Activated CD4-positive, alpha-beta T cell treated with anti-CD3 and anti-CD28 coated beads for 36 hours (primary cell): ENCODE measurements at regions of chr14 and their contacts with region 1.

Region 1: DNA sequence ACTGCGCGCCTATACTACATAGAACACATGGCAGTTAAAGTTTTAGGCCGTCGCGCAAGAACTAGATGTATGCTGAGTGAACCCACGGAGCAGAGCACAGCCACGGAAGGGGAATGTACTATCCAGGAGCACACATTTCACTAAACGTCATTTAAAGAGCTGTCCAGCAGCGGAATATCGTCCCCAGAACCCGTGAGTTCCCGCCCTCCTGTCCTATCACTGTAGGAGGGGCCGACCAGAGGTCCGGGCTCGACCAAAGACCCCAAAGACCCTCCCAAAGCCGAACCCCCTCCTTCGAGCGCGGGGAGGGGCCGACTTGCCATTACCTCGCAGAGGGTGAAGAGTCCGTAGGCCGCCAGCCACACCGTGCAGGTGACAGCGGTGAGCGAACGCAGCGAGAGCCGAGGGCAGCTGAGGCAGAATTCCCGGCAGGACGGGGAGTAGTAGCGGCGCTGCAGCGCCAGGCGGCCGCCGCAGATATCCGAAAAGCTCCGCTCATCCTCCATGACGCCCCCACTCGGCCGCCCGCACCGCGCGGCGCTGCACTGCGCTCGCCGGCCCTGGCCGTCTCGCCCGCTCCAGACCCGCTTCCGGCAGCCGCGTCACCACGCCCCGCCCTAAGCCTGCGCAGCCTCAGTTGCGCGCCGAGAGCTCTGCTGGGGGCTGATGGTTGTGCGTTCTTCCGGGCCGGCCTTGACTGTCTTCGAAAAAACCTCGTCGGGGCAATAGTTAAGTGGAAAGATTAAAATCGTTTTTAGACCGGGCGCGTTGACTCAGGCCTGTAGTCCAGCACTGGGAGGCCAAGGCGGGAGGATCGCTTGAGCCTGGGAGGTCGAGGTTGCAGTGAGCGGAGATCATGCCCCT is at the start of gene PIGH:
- DNase-seq: peak; percentile 97
- ATAC-seq: peak; percentile 99
- H3K4me3 Mint-ChIP-seq: peak within 1 kb of the TSS; percentile 94
- H3K27ac Mint-ChIP-seq: peak within 1 kb of the TSS; percentile 94
- H3K4me1 Mint-ChIP-seq: peaks cover 34% of the 10 kb centered on the region
- H3K27me3 Mint-ChIP-seq: no peaks in the 10 kb centered on the region
- total RNA-seq, gene PIGH: 14.9 to 21.4 TPM

Region 2: DNA sequence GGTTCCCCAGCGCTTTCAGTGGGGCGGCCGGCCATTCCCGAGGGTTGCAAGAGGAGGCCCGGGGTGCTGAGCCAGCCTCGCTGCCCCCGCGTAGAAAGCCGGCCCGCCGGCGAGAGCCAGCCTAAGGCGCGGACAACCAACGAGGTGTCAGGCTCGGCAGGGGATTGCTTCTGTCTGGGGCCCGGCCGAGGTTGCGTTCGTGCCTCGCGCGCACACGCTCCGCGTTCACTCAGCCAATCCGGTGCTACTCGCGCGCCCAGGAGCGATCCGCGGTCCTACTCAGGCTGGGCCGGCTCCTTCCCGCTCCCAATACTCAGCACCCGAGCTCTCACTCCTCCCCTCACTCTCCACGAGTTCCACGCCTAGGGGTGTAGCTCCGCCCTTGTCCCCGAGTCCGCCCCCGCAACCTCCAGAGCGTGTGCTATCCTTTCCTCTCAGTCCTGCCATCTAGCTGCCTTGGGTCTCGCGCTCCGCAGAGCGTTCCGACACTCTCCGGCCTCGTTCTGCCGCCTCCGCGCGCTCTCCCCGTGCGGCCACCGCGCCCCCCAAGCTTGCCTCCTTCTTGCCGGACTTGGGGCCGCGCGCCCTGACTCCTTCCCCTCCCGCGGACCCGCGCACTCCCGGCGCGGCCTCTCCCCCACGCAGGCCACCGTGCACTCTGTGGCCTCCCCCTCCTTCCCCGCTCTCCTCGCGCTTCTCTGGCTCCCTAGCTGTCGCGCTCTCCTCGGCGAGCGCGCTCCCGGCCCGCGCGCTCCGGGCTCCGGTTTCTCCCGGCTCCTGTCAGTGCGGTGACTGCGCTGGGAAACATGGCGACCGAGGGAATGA is 1092.0 kb before region 1 on chr14 and contains the start of gene GPHN:
- CTCF ChIA-PET with region 1: no interaction called
- POLR2A ChIA-PET with region 1: no interaction called
- intact Hi-C with region 1: loop called in 1 of 2 experiments (anchors 5 kb)
- DNase-seq: peak; percentile 96
- ATAC-seq: peak; percentile 96
- H3K4me3 Mint-ChIP-seq: peak within 1 kb of the TSS; percentile 90
- H3K27ac Mint-ChIP-seq: peak within 1 kb of the TSS; percentile 94
- H3K4me1 Mint-ChIP-seq: peaks cover 39% of the 10 kb centered on the region
- H3K27me3 Mint-ChIP-seq: peaks cover 3% of the 10 kb centered on the region
- total RNA-seq, gene GPHN: 29.8 to 37.5 TPM

Region 3: DNA sequence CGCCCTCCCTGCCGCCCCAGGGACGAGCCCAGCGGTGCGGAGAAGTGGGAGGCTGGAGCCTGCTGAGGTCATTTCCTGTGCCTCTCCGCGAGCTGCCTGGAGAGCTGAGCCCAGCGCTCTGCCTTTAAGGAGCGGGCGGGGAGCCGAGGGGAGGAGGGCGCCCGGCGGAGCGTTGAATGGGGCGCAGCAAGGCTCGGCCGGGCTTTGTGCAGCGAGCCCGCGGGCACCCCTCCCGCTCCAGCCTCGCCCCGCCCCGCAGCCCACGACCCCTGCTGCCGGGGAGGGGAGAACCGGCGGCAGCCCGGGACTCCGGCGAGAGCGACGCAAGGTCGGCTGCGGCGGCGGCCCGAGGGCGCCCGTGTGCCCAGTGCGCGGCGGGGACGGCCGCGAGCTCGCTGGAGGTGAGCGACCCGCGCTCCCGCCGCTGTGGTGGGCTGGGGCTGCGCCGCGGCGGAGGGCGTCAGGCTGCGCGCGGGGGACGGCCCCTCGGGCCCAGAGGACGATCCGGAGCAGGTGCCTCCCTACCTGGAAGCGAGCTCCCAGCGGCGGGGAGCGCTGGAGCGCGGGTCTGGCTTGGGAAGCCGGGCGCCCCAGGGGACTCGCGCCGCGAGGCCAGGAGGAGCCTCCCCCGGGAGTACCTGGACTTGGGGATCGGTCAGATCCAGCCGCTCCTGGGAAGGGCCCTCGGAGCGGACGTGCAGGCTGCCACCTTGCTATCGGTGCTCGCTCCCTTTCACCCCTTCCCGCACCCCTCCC is 66.8 kb before region 1 on chr14 and contains the start of gene PLEKHH1:
- CTCF ChIA-PET with region 1: no interaction called
- POLR2A ChIA-PET with region 1: no interaction called
- intact Hi-C with region 1: no loop called
- DNase-seq: peak; percentile 82
- ATAC-seq: peak; percentile 99
- H3K4me3 Mint-ChIP-seq: peak within 1 kb of the TSS; percentile 66
- H3K27ac Mint-ChIP-seq: no peak within 1 kb of the TSS
- H3K4me1 Mint-ChIP-seq: peaks cover 3% of the 10 kb centered on the region
- H3K27me3 Mint-ChIP-seq: peaks cover 17% of the 10 kb centered on the region
- total RNA-seq, gene PLEKHH1: 4.1 to 5.7 TPM

Region 4: GRCh38 chr14:67619446-67620216 is 19.7 kb after region 1 on chr14 and contains the start of gene ARG2:
- CTCF ChIA-PET with region 1: interaction called, 26 read pairs
- POLR2A ChIA-PET with region 1: interaction called, 6 read pairs
- intact Hi-C with region 1: loop called (anchors 1 kb)
- DNase-seq: peak; percentile 99
- ATAC-seq: peak; percentile 88
- H3K4me3 Mint-ChIP-seq: peak within 1 kb of the TSS; percentile 77
- H3K27ac Mint-ChIP-seq: peak within 1 kb of the TSS; percentile 73
- H3K4me1 Mint-ChIP-seq: peaks cover 31% of the 10 kb centered on the region
- H3K27me3 Mint-ChIP-seq: peaks cover 8% of the 10 kb centered on the region
- total RNA-seq, gene ARG2: 11.9 TPM

Region 5: DNA sequence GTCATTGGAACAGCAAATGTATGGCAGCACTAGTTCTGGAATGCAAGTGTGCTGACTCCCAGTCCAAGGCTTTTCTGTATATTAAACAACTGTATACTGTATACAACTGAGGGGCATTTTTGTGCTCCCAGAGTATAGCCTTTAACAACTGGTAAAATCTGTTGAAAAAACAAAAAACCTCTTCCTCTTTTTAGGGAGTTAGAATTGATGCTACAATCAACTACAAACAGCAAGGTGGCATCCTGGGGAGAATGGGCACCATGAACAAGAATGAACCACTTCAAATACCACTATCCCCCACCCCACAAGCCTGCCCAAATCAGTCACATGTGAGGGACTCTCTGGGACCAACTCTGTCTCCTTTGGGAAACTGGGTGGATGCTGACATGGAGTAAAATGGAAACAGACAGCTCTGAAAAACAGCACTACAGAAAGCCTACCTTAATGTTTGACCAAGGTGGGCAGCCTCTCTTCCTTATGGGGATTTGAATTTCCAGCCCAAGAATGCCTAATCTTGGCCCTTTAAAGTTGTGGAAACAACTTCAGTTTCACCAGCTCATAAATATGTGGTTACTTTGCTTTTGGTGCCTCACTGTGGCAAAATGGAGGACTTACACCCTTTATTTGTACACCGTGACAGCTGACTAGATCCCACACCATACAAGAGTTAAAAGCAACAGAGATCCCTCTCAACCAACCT is 67.0 kb after region 1 on chr14:
- CTCF ChIA-PET with region 1: interaction called, 18 read pairs
- POLR2A ChIA-PET with region 1: no interaction called
- intact Hi-C with region 1: loop called (anchors 1 kb)
- DNase-seq: peak; percentile 46
- ATAC-seq: peak; percentile 80
- H3K4me3 Mint-ChIP-seq: no peak overlapping the region
- H3K27ac Mint-ChIP-seq: peak overlapping the region; percentile 68
- H3K4me1 Mint-ChIP-seq: peaks cover 46% of the 10 kb centered on the region
- H3K27me3 Mint-ChIP-seq: no peaks in the 10 kb centered on the region

Region 6: DNA sequence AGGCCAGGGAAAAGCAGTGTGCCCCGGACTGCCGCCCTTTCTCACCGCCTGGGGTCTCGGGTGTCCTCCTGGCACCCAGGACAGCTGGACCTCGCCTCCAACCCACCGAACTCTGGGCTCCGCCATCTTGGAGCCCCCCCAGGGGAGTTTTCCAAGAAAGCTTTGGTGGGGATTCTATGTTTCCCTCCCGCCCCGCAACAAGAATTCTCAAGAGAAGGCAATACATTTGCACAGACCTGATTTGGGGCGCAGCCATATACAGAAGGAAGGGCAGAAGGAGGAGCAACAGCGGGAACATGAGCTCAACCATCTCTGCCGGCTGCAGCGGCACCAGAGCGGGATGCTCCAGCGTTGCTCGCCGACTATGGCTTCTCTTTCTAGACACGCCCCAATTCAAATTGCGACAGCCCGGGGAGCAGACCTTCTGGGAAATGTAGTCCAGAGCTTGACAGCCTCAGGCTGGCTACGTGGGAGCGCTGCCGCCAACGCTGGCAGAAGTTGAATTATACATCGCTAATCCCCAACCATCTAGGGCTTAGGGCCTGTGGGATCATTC is 95.5 kb after region 1 on chr14 and contains the start of gene RDH11:
- CTCF ChIA-PET with region 1: interaction called, 7 read pairs
- POLR2A ChIA-PET with region 1: interaction called, 7 read pairs
- intact Hi-C with region 1: loop called (anchors 1 to 2 kb)
- DNase-seq: peak; percentile 92
- ATAC-seq: peak; percentile 88
- H3K4me3 Mint-ChIP-seq: peak within 1 kb of the TSS; percentile 91
- H3K27ac Mint-ChIP-seq: peak within 1 kb of the TSS; percentile 98
- H3K4me1 Mint-ChIP-seq: peaks cover 21% of the 10 kb centered on the region
- H3K27me3 Mint-ChIP-seq: no peaks in the 10 kb centered on the region
- total RNA-seq, gene RDH11: 72.0 to 75.6 TPM

Region 7: DNA sequence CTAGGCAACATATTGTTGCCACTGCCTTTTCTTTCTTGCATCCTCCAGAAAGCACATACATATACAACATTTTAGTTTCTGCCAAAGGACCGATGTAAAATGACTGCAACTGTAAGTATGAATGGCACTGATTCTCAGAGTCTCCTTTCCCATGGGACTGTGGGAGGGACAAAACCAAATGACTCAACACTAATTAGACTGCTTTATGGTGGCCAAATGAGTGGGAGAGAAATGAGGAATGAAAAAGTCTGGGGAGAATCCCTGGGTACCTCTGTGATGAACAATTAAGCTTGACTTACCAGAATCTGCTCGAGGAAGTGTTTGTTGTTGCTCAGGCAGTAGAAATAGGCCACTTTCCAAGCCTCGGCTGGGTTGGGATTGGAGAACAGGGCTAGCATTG is 206.3 kb after region 1 on chr14:
- CTCF ChIA-PET with region 1: no interaction called
- POLR2A ChIA-PET with region 1: no interaction called
- intact Hi-C with region 1: no loop called
- DNase-seq: no peak
- ATAC-seq: no peak
- H3K4me3 Mint-ChIP-seq: no peak overlapping the region
- H3K27ac Mint-ChIP-seq: no peak overlapping the region
- H3K4me1 Mint-ChIP-seq: no peaks in the 10 kb centered on the region
- H3K27me3 Mint-ChIP-seq: no peaks in the 10 kb centered on the region

Region 8: GRCh38 chr14:67816326-67817002 is 216.5 kb after region 1 on chr14 and contains the start of gene ZFYVE26:
- CTCF ChIA-PET with region 1: interaction called, 3 read pairs
- POLR2A ChIA-PET with region 1: no interaction called
- intact Hi-C with region 1: loop called in 1 of 2 experiments (anchors 1 kb)
- DNase-seq: peak; percentile 95
- ATAC-seq: peak; percentile 89
- H3K4me3 Mint-ChIP-seq: peak within 1 kb of the TSS; percentile 89
- H3K27ac Mint-ChIP-seq: peak within 1 kb of the TSS; percentile 92
- H3K4me1 Mint-ChIP-seq: peaks cover 45% of the 10 kb centered on the region
- H3K27me3 Mint-ChIP-seq: no peaks in the 10 kb centered on the region
- total RNA-seq, gene ZFYVE26: 13.0 to 14.2 TPM